Motor neuron (in vitro differentiated cells): ENCODE measurements at regions of chr13 and their contacts with region 1.

Region 1: GRCh38 chr13:99151516-99151915 is 49.1 kb upstream of the UBAC2 start:
- ATAC-seq: peak in 3 of 8 experiments; percentile 47 to 65 (median 53)
- H3K4me3 ChIP-seq: no peak overlapping the region
- H3K27ac ChIP-seq: no peak overlapping the region
- H3K4me1 ChIP-seq: no peaks in the 10 kb centered on the region

Region 2: DNA sequence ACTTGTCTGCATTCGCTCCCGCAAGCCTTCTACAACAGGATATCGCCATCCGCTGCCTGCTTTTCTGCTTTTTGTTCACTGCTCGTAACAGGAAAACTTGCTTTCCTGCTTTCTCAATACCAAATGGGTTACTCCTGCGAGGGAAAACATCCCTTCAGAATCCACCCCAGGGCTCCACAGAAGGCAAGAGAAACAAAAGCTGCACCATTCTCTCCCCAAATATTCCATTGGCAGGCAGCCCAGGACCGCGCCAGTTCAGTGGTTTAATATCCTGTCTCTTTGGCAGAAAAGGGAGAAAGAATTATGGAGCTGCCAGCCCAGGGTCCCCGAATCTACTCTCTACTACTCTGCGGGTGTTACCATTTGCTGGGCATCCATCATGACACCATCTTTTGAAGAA is 88.9 kb before region 1 on chr13:
- in situ Hi-C with region 1: loop called in 1 of 9 experiments (anchors 25 kb)
- ATAC-seq: peak in 2 of 8 experiments; percentile 38 to 45
- H3K4me3 ChIP-seq: no peak overlapping the region
- H3K27ac ChIP-seq: no peak overlapping the region
- H3K4me1 ChIP-seq: no peaks in the 10 kb centered on the region

Region 3: DNA sequence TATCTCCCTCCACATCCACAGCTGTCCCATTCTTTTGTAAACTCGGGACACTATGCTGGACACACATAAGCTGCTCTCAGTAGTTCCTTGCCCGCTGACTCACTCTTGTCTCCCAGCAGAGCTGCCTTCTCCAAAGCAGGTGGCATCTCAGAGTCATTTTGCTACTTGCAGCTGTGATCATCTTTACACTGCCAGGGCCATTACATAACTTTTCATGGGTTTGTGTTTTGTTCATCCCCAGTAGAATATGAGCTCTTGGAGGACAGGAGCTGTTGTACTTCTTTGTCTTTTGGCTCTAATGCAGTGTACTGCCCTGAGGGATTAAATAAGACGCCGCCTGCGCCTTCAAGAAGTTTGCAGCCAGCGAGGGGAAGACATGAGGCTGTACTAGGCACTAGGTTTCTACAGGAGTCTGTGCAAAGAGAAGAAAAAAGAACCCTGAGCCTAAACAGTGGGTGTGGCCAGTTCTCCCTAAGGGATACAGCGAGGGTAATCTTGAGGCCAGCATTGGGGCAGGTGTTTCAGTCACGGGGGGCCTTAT is 196.5 kb after region 1 on chr13:
- in situ Hi-C with region 1: no loop called
- ATAC-seq: no peak
- H3K4me3 ChIP-seq: no peak overlapping the region
- H3K27ac ChIP-seq: no peak overlapping the region
- H3K4me1 ChIP-seq: peaks cover 5 to 7% of the 10 kb centered on the region in 2 donors